CD8-positive, alpha-beta memory T cell (primary cell): ENCODE measurements at regions of chr1 and their contacts with region 1.

Region 1: GRCh38 chr1:36187800-36188593 is 32.0 kb downstream of the MAP7D1 start:
- DNase-seq: peak; percentile 67 to 89 (median 76)
- H3K4me3 ChIP-seq: no peak overlapping the region
- H3K4me3 Mint-ChIP-seq: no peak overlapping the region
- H3K27ac ChIP-seq: no peak overlapping the region
- H3K27ac Mint-ChIP-seq: peak overlapping the region; percentile 0 to 94 (median 86)
- H3K4me1 ChIP-seq: peaks cover 5% of the 10 kb centered on the region
- H3K4me1 Mint-ChIP-seq: peaks cover 8 to 15% (median 12%) of the 10 kb centered on the region in 3 donors
- H3K27me3 ChIP-seq: no peaks in the 10 kb centered on the region
- H3K27me3 Mint-ChIP-seq: peaks cover 0 to 1% of the 10 kb centered on the region in 2 donors

Region 2: DNA sequence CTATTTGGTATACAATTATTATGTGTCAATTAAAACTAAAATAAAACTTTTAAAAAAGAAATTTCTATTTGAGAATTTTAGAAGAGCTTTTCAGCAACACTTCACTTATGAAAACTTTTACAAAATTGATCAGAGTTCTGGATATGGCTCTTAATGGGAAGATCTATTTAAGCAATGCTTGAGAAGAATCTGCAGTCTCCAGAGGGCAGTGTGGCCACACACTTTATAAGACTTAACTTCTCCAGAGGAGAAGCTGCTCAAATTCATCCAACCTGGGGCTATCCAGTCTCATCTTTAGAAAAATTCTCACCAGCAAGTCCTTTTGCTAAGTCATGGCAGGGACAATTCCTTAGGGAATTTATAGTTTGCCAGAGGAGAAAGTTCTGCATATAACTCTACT is 330.2 kb before region 1 on chr1:
- CTCF ChIA-PET with region 1: no interaction called
- POLR2A ChIA-PET with region 1: no interaction called
- DNase-seq: no peak
- H3K4me3 ChIP-seq: no peak overlapping the region
- H3K4me3 Mint-ChIP-seq: no peak overlapping the region
- H3K27ac ChIP-seq: no peak overlapping the region
- H3K27ac Mint-ChIP-seq: no peak overlapping the region
- H3K4me1 ChIP-seq: no peaks in the 10 kb centered on the region
- H3K4me1 Mint-ChIP-seq: no peaks in the 10 kb centered on the region
- H3K27me3 ChIP-seq: no peaks in the 10 kb centered on the region
- H3K27me3 Mint-ChIP-seq: no peaks in the 10 kb centered on the region

Region 3: GRCh38 chr1:36099681-36100341 is 88.2 kb before region 1 on chr1:
- CTCF ChIA-PET with region 1: interaction called, 15 read pairs
- POLR2A ChIA-PET with region 1: no interaction called
- DNase-seq: peak; percentile 58 to 83 (median 72)
- H3K4me3 ChIP-seq: no peak overlapping the region
- H3K4me3 Mint-ChIP-seq: peak overlapping the region in 2 of 7 donors; percentile 39 to 54
- H3K27ac ChIP-seq: no peak overlapping the region
- H3K27ac Mint-ChIP-seq: peak overlapping the region in 3 of 8 donors; percentile 29 to 90 (median 71)
- H3K4me1 ChIP-seq: no peaks in the 10 kb centered on the region
- H3K4me1 Mint-ChIP-seq: peaks cover 0 to 7% (median 4%) of the 10 kb centered on the region in 3 donors
- H3K27me3 ChIP-seq: no peaks in the 10 kb centered on the region
- H3K27me3 Mint-ChIP-seq: no peaks in the 10 kb centered on the region

Region 4: GRCh38 chr1:36142121-36142520 is 45.9 kb before region 1 on chr1:
- CTCF ChIA-PET with region 1: interaction called, 36 read pairs
- POLR2A ChIA-PET with region 1: no interaction called
- DNase-seq: no peak
- H3K4me3 ChIP-seq: no peak overlapping the region
- H3K4me3 Mint-ChIP-seq: no peak overlapping the region
- H3K27ac ChIP-seq: no peak overlapping the region
- H3K27ac Mint-ChIP-seq: peak overlapping the region in 2 of 8 donors; percentile 56 to 66
- H3K4me1 ChIP-seq: no peaks in the 10 kb centered on the region
- H3K4me1 Mint-ChIP-seq: peaks cover 26 to 51% (median 50%) of the 10 kb centered on the region in 3 donors
- H3K27me3 ChIP-seq: no peaks in the 10 kb centered on the region
- H3K27me3 Mint-ChIP-seq: peaks cover 0 to 1% of the 10 kb centered on the region in 2 donors

Region 5: DNA sequence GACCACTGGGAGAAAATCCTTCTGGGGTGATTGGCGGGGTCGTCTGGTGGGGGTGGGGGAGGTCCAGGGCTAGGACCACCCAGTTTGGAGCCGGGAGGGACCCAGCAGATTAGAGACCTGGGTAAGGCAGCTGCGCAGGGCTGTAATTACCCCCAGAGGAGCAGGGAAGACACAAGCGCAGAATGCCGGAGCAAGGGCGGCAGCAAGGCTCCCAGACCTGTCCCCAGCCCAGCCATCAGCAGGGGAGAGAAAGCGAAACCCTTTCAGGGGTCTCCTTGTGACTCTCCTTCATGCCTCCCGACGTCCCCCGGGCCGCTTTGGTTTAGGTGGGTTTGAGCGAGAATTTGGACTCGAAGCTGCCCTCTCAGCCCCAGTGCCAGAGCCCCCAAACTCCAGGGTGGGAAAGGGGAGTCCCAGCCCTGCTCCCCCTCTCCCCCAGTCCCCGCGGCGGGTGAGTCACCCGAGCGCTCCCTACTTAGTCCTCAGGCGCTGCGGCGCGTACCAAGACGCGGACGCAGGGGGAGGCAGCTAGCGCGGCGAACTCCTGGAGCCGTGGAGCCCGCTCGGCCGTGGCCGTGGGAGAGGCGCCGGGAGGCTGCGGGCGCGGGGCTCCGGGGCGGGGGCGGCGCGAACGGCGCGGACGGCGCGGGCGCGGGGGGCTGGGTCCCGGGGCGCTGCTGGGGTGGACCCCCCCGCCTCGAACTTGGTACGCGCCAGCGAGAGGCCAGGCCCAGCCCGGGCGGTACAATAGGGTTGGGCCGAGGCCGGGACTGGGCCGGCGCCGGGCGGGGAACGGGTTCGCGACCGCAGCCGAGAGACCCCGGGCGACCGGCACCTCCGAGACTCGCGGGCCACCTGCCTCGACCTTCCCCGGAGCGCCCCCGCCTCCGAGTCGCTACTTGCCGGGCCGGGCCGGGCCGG is 32.3 kb before region 1 on chr1 and contains the start of gene MAP7D1:
- CTCF ChIA-PET with region 1: interaction called, 190 read pairs
- POLR2A ChIA-PET with region 1: interaction called, 22 read pairs
- DNase-seq: peak; percentile 82 to 91 (median 85)
- H3K4me3 ChIP-seq: peak within 1 kb of the TSS; percentile 98
- H3K4me3 Mint-ChIP-seq: peak within 1 kb of the TSS; percentile 85 to 97 (median 92)
- H3K27ac ChIP-seq: peak within 1 kb of the TSS; percentile 92
- H3K27ac Mint-ChIP-seq: peak within 1 kb of the TSS; percentile 86 to 97 (median 94)
- H3K4me1 ChIP-seq: peaks cover 75% of the 10 kb centered on the region
- H3K4me1 Mint-ChIP-seq: peaks cover 69 to 79% (median 71%) of the 10 kb centered on the region in 3 donors
- H3K27me3 ChIP-seq: no peaks in the 10 kb centered on the region
- H3K27me3 Mint-ChIP-seq: no peaks in the 10 kb centered on the region
- total RNA-seq, gene MAP7D1: 183 to 185 TPM

Region 6: DNA sequence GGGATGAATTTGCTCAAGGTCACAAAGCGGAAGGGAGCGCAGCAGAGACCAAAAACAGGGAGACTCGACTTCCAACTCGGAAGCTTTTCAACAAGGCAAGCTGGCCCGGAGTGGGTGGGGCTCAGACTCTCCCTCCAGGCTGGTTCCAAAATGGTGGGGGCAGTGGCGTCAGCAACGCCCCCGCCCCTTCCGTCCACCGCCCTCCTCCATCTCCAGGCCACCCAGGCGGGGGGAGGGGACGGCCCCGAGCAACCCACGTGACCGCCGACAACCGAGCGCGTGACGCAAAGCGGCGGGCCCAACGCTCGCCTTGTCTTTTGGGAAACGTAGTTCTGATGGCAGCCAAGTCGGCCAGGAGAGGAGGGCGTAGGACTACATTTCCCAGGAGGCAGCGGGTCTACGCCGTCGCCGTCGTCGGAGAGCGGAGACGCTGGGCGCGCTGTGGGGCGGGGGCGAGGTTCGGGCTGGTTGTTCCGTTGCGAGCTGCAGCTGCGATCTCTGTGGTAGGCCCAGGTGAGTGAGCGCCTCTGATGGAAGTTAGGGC is 36.1 kb after region 1 on chr1 and contains the start of gene THRAP3:
- CTCF ChIA-PET with region 1: interaction called, 11 read pairs
- POLR2A ChIA-PET with region 1: interaction called, 6 read pairs
- DNase-seq: peak; percentile 99 to 100 (median 100)
- H3K4me3 ChIP-seq: peak within 1 kb of the TSS; percentile 88
- H3K4me3 Mint-ChIP-seq: peak within 1 kb of the TSS; percentile 89 to 99 (median 96)
- H3K27ac ChIP-seq: peak within 1 kb of the TSS; percentile 96
- H3K27ac Mint-ChIP-seq: peak within 1 kb of the TSS; percentile 97 to 100 (median 100)
- H3K4me1 ChIP-seq: peaks cover 36% of the 10 kb centered on the region
- H3K4me1 Mint-ChIP-seq: peaks cover 28 to 46% (median 36%) of the 10 kb centered on the region in 3 donors
- H3K27me3 ChIP-seq: no peaks in the 10 kb centered on the region
- H3K27me3 Mint-ChIP-seq: peaks cover 0 to 4% of the 10 kb centered on the region in 2 donors
- total RNA-seq, gene THRAP3: 167 to 168 TPM

Region 7: DNA sequence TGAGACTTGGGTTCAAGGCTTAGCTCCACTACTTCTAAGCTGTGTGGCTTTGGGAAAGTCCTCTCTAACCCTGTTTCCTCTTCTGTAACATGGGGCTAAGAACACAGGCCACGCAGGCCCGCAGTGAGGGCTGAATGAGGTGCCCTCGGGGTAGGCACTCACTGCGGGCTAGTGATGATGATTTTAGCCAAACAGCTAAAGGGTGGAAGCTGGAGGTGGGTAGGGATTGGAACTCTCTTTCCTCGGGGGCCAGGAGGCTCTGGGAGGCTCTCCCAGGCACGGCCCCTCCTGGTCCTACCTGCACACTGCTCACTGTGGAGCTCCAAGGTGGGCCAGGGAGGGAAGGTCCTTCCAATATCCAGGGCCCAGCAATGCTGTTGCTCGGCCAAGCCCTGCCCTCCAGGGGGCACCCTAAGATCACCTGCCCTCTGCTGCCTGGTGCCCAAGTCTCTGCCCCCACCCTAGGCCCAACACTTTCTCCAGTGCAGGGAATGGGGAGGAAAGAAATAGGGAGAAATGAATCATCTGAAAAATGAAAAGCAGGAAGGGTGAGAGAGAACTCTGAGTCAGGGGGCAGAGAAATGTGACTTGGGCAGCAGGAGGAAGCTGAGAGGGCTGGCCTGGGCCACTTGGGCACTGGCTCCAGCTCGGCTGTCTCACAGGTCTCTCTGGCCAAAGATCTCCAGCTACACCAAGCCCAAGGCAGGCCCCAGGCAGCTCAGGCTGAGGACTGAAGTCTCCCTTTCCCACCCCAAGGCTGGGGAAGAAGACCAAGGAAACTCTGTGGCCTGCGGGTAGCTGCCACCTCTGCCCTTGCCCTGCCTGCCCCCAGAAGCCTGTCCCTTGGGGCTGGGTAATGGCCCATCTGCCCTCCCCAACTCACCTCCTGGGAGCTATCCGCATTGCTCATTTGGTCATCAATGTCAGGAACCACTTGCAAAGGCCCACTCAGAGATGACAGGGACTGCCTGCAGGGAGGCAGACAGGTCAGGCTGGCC is 154.8 kb after region 1 on chr1:
- CTCF ChIA-PET with region 1: no interaction called
- POLR2A ChIA-PET with region 1: no interaction called
- DNase-seq: peak; percentile 41 to 70 (median 46)
- H3K4me3 ChIP-seq: no peak overlapping the region
- H3K4me3 Mint-ChIP-seq: no peak overlapping the region
- H3K27ac ChIP-seq: no peak overlapping the region
- H3K27ac Mint-ChIP-seq: peak overlapping the region in 4 of 8 donors; percentile 17 to 66 (median 55)
- H3K4me1 ChIP-seq: peaks cover 10% of the 10 kb centered on the region
- H3K4me1 Mint-ChIP-seq: peaks cover 3 to 9% (median 4%) of the 10 kb centered on the region in 3 donors
- H3K27me3 ChIP-seq: no peaks in the 10 kb centered on the region
- H3K27me3 Mint-ChIP-seq: no peaks in the 10 kb centered on the region